Sciatic nerve (tissue), 2 donors: ENCODE measurements at regions of chr6 and their contacts with region 1.

Region 1: GRCh38 chr6:98323605-98324004 is 510.8 kb upstream of the POU3F2 start:
- DNase-seq: no peak
- ATAC-seq: no peak

Region 2: GRCh38 chr6:97316978-97317377 is 1006.6 kb before region 1 on chr6:
- intact Hi-C with region 1: loop called (anchors 5 kb)
- DNase-seq: no peak
- ATAC-seq: no peak